ENCODE measurements at regions of chr1 and their contacts with region 1.

Region 1: DNA sequence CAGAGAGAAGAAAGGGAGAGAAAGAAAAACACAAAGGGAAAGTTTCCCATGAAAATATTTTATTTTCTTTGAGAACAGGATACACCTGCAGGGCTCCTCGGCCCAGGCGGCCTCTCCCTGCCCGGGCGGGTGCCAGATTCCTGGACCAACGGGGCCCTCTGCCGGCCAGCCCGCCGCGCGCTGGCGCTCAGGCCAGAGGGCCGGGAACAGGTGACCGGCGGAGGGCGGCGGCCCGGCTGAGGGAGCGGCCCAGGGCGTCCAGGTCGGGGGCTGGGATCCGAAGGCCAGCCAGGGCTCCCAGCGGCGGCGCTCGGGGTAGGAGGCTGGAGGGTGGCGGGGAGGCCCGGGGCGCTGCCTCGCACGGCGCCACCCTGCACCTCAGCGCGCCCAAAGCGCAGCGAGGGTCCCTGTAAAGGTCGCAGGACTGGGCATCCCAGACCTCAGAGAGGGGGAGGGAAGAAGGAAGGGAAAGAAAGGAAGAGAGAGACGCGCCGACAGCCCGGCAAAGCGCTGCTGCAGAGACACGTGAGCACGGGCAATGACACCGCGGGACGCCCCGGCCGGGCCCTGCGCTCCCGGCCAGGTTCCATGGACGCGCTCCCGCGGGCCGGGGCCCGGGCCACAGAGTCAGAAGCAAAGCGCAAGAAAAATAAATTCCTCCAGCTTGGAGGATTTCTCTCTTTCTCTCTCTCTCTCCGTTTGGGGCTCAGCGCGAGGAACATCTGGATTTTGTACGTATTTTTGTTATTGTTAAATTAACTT is 927 bp downstream of the WNT9A start:
- DNase-seq: peak; percentile 72 to 80 (median 76)
- ATAC-seq: peak; percentile 81 to 95 (median 88)
- H3K4me3 ChIP-seq: peak overlapping the region; percentile 16 to 36 (median 27)
- H3K27ac ChIP-seq: no peak overlapping the region
- H3K4me1 ChIP-seq: peaks cover 0 to 9% (median 0%) of the 10 kb centered on the region in 4 donors
- H3K27me3 ChIP-seq: no peaks in the 10 kb centered on the region
- CTCF ChIP-seq: peak; percentile 63 to 84 (median 71)
- POLR2A ChIP-seq: no peak

Region 2: DNA sequence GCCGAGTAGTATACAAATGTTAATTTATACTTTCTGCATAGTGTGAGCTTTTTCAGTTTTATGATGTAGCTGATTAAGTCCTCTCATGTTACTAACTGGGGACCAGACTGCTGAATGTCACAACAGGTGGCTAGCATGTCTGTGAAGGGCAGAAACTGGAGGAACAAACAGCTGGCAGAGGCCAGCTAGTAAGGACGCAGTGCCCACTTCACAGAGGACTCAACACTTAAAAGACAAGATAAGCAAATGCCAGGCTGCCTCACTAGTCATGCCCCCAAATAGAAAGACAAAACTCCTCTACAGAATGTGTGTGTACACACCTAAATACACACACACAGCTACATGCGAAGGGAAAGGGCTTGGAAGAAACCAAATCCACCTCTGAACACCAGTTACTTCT is 457.2 kb before region 1 on chr1:
- intact Hi-C with region 1: loop called (anchors 5 to 10 kb)
- DNase-seq: no peak
- ATAC-seq: no peak
- H3K4me3 ChIP-seq: no peak overlapping the region
- H3K27ac ChIP-seq: no peak overlapping the region
- H3K4me1 ChIP-seq: no peaks in the 10 kb centered on the region
- H3K27me3 ChIP-seq: no peaks in the 10 kb centered on the region
- CTCF ChIP-seq: no peak
- POLR2A ChIP-seq: no peak

Region 3: DNA sequence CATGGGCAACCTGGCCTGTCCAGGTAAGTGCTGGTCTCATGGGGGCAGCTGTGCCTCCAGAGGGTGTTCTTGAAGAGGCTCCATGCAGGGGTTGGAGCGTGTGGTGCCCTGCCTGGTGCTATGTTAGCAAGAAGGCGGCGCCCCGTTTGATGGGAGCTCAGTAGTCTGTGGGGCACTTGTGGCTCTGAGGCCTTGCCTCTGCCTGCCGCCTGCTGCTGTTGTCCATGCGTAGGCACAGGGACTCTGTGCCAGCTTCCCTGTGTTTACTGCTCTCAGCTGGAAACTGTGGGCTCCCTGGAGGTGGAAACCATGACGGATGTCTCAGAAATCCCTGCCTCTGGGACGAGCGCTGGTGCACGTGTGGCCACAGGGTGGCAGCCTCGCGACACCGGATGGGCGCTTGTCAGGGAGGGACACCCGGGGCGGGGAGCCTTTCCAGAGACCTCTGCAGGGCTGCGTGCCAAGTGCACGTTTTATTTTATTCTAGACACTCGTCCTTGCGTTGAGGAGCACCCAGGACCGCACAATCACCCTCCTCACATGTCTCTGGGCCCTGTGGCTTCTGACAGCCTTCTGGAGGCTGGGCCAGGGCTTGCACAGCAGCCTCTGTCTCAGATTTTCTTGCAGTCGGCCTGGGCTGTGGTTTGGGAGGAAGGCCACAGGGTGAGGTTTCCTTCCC is 184.4 kb before region 1 on chr1:
- intact Hi-C with region 1: loop called (anchors 5 to 10 kb)
- DNase-seq: peak; percentile 80 to 88 (median 85)
- ATAC-seq: peak; percentile 85 to 96 (median 92)
- H3K4me3 ChIP-seq: no peak overlapping the region
- H3K27ac ChIP-seq: no peak overlapping the region
- H3K4me1 ChIP-seq: peaks cover 0 to 25% (median 4%) of the 10 kb centered on the region in 4 donors
- H3K27me3 ChIP-seq: no peaks in the 10 kb centered on the region
- CTCF ChIP-seq: peak; percentile 79 to 89 (median 82)
- POLR2A ChIP-seq: no peak

Region 4: DNA sequence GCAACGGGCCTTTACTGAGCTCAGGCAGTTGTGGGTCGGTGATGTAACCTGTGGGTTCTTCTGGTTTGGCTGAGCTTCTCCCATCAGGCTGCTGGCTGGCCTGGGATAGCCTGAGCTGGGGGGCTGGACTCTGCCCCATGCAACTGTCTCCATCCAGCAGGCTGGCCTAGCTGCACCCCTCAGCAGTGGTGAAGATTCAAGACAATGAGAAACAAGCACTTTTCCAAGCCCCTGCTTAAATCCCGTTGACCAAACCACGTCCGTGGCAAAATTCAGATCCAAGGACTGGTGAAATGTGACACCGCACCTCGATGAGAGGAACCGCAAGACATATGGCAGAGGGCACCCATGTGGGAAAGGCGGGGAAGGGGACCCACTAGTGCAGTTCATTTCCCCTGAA is 105.7 kb before region 1 on chr1:
- intact Hi-C with region 1: no loop called
- DNase-seq: no peak
- ATAC-seq: no peak
- H3K4me3 ChIP-seq: no peak overlapping the region
- H3K27ac ChIP-seq: no peak overlapping the region
- H3K4me1 ChIP-seq: no peaks in the 10 kb centered on the region
- H3K27me3 ChIP-seq: no peaks in the 10 kb centered on the region
- CTCF ChIP-seq: no peak
- POLR2A ChIP-seq: no peak